ENCODE measurements at regions of chr2 and their contacts with region 1.

Region 1: DNA sequence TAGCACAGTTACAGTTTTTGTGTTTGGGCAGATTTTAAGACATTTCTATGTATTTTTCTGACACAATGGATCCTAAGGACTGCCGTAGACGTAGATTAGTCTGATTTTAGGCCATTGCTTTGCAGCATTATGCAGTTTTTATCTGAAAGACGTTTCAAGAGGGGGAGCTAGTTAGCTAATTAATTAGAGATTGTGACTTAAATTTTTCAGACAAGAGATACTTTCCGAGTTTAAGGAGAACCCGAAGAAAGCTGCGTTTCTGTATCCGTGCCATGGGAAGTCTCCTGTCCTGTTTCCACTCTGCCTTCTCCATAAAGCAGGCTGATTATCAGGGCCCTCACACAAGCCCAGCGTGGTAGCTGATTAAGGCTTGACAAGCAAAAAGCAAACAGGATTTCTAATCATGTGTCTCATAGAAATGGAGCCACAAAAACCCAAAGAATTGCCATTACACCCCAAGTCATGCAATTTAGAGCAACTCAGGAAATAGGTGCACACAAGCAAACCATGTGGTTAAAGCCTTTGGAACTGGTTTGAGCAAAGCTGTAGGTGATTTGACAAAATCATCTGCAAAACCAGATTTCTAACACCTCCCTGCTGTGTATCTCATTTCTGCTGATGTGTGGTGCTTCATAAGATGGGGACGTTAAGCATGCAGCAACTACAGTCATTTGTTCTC is 808.1 kb downstream of the RNF144A start:
- DNase-seq: peak; percentile 46
- ATAC-seq: peak; percentile 72
- H3K4me3 Mint-ChIP-seq: peak overlapping the region; percentile 81
- H3K27ac Mint-ChIP-seq: peak overlapping the region; percentile 90
- H3K4me1 Mint-ChIP-seq: peaks cover 37% of the 10 kb centered on the region
- H3K27me3 Mint-ChIP-seq: no peaks in the 10 kb centered on the region
- CTCF ChIP-seq: no peak

Region 2: DNA sequence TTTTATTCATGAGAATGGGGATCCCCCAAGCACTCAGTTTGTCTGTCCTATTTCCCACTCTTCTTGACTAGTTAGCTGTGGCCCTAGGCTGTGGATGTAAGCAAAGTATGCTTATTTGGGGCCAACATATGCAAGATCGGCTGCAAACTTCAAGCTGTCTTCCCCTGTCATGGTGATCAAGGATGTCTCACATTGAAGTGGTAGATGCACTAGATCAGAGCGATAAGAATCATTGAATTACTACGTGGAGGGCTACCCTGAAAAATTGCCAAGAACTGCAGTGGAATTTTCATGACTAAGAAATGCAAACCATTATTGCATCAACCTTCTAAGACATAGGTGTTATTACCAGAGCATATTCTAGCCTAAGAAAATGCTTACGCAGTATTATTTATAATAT is 280.7 kb before region 1 on chr2:
- CTCF ChIA-PET with region 1: interaction called, 3 read pairs
- POLR2A ChIA-PET with region 1: interaction called, 29 read pairs
- intact Hi-C with region 1: loop called (anchors 5 kb)
- DNase-seq: no peak
- ATAC-seq: peak; percentile 69
- H3K4me3 Mint-ChIP-seq: no peak overlapping the region
- H3K27ac Mint-ChIP-seq: peak overlapping the region; percentile 91
- H3K4me1 Mint-ChIP-seq: peaks cover 71% of the 10 kb centered on the region
- H3K27me3 Mint-ChIP-seq: no peaks in the 10 kb centered on the region
- CTCF ChIP-seq: no peak

Region 3: GRCh38 chr2:7523481-7524120 is 201.7 kb before region 1 on chr2:
- CTCF ChIA-PET with region 1: no interaction called
- POLR2A ChIA-PET with region 1: interaction called, 19 read pairs
- intact Hi-C with region 1: no loop called
- DNase-seq: peak; percentile 32
- ATAC-seq: peak; percentile 54
- H3K4me3 Mint-ChIP-seq: peak overlapping the region; percentile 48
- H3K27ac Mint-ChIP-seq: peak overlapping the region; percentile 87
- H3K4me1 Mint-ChIP-seq: peaks cover 72% of the 10 kb centered on the region
- H3K27me3 Mint-ChIP-seq: no peaks in the 10 kb centered on the region
- CTCF ChIP-seq: no peak

Region 4: GRCh38 chr2:7661477-7661876 is 63.8 kb before region 1 on chr2:
- CTCF ChIA-PET with region 1: no interaction called
- POLR2A ChIA-PET with region 1: no interaction called
- intact Hi-C with region 1: no loop called
- DNase-seq: no peak
- ATAC-seq: no peak
- H3K4me3 Mint-ChIP-seq: no peak overlapping the region
- H3K27ac Mint-ChIP-seq: no peak overlapping the region
- H3K4me1 Mint-ChIP-seq: peaks cover 7% of the 10 kb centered on the region
- H3K27me3 Mint-ChIP-seq: no peaks in the 10 kb centered on the region
- CTCF ChIP-seq: no peak

Region 5: GRCh38 chr2:7672027-7672684 is 53.2 kb before region 1 on chr2:
- CTCF ChIA-PET with region 1: interaction called, 27 read pairs
- POLR2A ChIA-PET with region 1: interaction called, 21 read pairs
- intact Hi-C with region 1: loop called (anchors 5 kb)
- DNase-seq: peak; percentile 85
- ATAC-seq: peak; percentile 84
- H3K4me3 Mint-ChIP-seq: peak overlapping the region; percentile 50
- H3K27ac Mint-ChIP-seq: peak overlapping the region; percentile 95
- H3K4me1 Mint-ChIP-seq: peaks cover 62% of the 10 kb centered on the region
- H3K27me3 Mint-ChIP-seq: no peaks in the 10 kb centered on the region
- CTCF ChIP-seq: peak; percentile 98

Region 6: DNA sequence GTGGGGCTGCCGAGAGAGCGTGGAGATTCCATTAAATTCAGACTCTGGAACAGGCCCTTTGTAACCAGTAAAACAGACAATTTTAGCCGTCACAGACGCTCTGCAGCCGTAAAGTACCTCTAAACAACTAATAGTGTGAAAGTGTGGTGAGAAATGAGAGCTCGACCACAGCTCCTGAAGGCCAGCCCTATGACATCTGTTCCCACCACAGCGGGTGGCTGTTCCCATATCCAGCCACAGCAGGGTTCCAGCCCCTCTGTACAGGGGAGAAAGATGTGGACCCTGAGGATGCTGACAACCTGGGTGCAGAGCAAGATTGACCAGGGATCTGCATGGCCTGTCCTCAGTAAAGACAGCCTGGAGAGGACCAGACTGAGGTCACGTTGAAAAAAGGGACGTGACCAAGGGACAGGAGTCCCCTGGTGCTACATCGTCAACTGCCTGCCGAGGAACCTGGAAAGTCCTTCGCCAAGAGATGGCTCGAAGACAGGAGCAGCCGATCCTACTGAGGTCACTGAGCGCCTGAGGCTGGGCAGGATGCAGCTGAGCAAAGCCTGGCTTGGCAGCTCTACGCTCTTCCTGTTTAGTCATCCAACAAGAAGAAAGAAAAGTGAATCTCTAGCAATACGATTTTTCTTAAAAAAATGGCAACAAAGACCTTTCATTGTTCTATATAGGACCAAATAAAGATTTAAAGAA is 23.6 kb after region 1 on chr2:
- CTCF ChIA-PET with region 1: interaction called, 12 read pairs
- POLR2A ChIA-PET with region 1: interaction called, 3 read pairs
- intact Hi-C with region 1: no loop called
- DNase-seq: peak; percentile 66
- ATAC-seq: peak; percentile 61
- H3K4me3 Mint-ChIP-seq: peak overlapping the region; percentile 47
- H3K27ac Mint-ChIP-seq: peak overlapping the region; percentile 80
- H3K4me1 Mint-ChIP-seq: peaks cover 40% of the 10 kb centered on the region
- H3K27me3 Mint-ChIP-seq: no peaks in the 10 kb centered on the region
- CTCF ChIP-seq: no peak

Region 7: GRCh38 chr2:7812231-7812995 is 87.1 kb after region 1 on chr2:
- CTCF ChIA-PET with region 1: no interaction called
- POLR2A ChIA-PET with region 1: no interaction called
- intact Hi-C with region 1: no loop called
- DNase-seq: no peak
- ATAC-seq: no peak
- H3K4me3 Mint-ChIP-seq: no peak overlapping the region
- H3K27ac Mint-ChIP-seq: no peak overlapping the region
- H3K4me1 Mint-ChIP-seq: peaks cover 3% of the 10 kb centered on the region
- H3K27me3 Mint-ChIP-seq: no peaks in the 10 kb centered on the region
- CTCF ChIP-seq: no peak

Measured in activated CD8-positive, alpha-beta T cell treated with anti-CD3 and anti-CD28 coated beads for 36 hours (primary cell).